ENCODE measurements at regions of chr4 and their contacts with region 1.

Region 1: DNA sequence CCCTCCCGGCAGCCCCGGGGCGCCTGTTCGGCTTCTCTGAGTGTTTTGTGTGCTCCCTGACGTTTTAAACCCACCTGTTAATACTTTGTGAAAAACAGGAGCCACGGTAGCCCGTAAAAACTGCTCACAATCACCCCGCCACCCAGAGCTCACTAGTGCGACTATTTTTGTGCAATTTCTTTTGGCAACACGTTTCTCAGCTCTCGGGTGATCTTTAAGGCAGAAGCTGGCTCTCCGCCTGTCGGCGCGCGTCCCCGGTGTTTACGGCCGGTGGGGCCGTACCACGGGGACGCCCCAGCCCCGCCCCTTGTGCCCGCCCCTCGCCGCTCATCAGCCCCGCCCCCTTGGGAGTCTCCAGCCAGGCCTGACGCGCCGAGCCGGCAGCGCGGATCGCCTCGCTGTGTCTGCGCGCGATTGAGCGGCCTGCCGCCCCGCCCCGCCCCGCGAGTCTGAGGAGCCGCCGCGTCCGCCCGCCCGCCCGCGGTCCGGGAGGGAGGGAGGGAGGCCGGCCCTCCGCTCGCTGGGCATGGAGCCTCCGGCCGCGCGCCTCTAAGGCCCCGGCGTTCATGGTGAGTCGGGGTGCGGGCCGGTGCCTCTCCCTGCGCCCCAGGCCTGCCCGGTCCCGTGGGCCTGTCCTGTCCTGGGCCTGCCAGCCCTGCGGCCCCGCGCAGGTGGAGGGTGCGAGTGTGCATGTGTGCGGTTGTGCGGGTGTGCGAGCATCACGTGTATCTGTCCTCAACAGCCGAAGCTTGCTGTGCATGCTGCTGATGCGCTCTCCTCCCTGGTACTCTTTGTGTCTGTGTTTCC is 56.2 kb upstream of the TADA2B start:
- DNase-seq: peak; percentile 96 to 98
- ATAC-seq: peak; percentile 98
- H3K4me3 ChIP-seq: peak overlapping the region; percentile 78 to 96
- H3K27ac ChIP-seq: peak overlapping the region; percentile 62 to 88
- H3K4me1 ChIP-seq: peaks cover 0 to 3% of the 10 kb centered on the region in 2 donors
- H3K27me3 ChIP-seq: no peaks in the 10 kb centered on the region

Region 2: DNA sequence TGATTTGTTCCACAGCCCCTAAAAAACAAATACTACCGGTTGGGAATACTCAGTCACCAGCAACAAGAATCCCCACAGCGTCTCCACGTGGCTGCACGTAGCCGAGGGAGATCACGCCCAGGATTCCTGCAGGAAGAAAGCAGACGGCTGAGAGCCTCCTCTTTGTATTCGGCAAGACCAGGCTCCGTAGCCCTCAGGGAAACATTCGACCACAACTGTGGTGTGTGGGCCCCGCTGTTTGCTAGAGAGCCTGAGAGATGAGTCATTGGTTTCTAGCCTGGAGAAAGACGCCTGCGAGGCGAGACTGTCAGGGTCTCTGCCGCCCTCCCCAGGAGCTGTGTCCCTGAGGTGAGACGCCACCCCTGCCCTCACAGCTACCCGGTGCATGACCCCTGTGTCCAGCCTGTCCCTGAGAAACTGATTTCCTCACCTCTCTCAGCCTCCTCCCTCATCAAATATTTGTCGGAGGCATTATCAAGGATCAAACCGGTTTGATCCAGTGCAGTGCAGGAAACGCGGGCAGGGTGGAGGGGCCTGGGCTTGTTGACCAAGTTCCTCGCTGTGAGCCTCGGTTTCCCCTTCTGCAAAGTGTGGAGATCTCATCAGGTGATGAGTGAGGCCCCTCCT is 298.0 kb before region 1 on chr4:
- intact Hi-C with region 1: no loop called
- DNase-seq: peak in 1 of 2 donors; percentile 66
- ATAC-seq: no peak
- H3K4me3 ChIP-seq: no peak overlapping the region
- H3K27ac ChIP-seq: no peak overlapping the region
- H3K4me1 ChIP-seq: no peaks in the 10 kb centered on the region
- H3K27me3 ChIP-seq: no peaks in the 10 kb centered on the region

Region 3: DNA sequence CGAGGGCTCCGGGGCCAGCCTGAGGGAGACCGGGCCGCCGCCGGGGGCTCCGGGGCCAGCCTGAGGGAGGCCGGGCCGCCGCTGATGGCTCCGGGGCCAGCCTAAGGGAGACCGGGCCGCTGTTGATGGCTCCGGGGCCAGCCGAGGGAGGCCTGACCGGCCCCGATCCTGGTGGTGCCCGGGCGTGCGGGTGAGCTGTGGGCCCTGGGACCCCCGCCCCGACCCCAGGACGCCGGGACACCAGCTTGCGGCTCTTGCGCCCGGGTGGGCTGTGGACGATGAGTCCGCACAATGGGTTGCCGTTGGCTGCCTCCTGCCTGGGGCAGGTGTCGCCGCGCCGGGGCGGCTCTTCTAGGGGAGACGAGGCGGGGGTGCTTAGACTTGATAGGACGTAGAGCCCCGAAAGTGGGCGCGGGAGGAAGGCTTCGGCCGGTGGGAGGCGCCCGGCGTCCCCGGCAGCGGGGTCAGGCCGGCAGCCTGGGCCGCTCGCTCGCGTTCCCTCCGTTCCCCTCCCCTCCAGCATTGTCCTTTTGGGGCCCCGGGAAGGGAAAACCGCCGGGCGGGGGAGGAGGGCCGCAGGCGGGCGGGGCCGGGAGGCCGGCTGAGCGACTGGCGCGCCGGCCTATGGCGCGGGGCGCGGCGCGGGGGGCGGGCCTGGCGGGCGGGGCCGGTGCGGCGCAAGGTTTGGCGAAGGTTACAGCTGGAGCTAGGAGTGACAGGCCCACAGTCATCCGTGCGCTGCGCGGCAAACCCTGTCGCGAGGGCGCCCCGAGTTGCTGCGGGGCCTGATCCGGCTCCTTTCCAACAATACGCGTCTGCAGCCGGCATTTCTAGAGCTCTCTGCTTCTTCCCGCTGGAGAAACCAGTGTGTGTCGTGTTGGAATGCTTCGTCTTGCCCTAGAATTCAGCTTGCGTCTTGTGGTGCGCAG is 203.7 kb before region 1 on chr4:
- intact Hi-C with region 1: loop called in 1 of 2 experiments (anchors 10 kb)
- DNase-seq: peak; percentile 92 to 96
- ATAC-seq: peak; percentile 94
- H3K4me3 ChIP-seq: peak overlapping the region; percentile 90 to 96
- H3K27ac ChIP-seq: peak overlapping the region; percentile 98 to 99
- H3K4me1 ChIP-seq: no peaks in the 10 kb centered on the region
- H3K27me3 ChIP-seq: no peaks in the 10 kb centered on the region

Region 4: DNA sequence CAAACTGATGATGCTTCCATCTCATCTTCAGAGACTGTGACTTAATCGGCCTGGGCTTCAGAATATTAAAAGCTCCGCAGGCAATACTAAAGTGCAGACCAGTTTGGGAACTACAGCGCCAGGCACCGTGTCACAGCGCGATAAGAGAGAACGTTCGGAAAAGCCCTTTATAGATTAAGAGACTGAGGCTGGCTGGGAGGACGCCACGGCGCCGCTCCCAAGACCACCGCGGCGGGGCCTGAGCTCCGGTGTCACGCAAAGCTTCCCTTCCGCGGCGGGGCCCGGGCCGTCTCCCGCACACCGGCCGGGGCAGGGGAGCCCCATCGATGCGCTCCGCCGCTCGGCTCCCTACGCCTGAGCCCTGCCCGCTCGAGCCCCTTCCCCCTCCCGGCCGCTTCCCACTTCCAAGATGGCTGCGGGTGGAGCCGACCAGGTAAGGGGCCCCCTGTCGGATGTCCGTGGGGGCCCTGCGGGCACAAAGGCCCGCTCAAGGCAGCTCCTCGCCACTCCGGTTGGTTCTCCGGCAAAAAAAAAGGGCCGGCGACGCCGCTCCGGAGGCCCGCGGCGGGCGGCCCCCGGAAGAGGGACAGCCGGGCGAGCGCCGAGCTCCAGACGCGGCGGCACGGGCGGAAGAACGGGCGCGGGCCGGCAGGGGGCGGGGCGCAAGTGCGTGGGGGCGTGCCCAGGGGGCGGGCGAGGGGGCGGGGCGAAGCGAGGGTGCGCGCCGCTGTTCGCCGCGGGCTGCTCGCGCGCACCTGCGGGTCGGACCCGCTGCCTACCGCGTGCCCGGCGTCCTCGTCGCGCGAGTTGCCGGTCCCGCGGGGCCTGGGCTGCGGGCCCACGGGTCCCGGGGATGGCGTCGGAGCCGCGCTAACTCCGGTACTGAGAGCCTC is 77.7 kb before region 1 on chr4 and contains the start of gene TBC1D14:
- intact Hi-C with region 1: loop called (anchors 2 to 5 kb)
- DNase-seq: peak; percentile 93 to 96
- ATAC-seq: peak; percentile 97
- H3K4me3 ChIP-seq: peak within 1 kb of the TSS; percentile 78 to 98
- H3K27ac ChIP-seq: peak within 1 kb of the TSS; percentile 68 to 97
- H3K4me1 ChIP-seq: no peaks in the 10 kb centered on the region
- H3K27me3 ChIP-seq: no peaks in the 10 kb centered on the region
- total RNA-seq, gene TBC1D14: 33.8 to 59.7 TPM

Region 5: DNA sequence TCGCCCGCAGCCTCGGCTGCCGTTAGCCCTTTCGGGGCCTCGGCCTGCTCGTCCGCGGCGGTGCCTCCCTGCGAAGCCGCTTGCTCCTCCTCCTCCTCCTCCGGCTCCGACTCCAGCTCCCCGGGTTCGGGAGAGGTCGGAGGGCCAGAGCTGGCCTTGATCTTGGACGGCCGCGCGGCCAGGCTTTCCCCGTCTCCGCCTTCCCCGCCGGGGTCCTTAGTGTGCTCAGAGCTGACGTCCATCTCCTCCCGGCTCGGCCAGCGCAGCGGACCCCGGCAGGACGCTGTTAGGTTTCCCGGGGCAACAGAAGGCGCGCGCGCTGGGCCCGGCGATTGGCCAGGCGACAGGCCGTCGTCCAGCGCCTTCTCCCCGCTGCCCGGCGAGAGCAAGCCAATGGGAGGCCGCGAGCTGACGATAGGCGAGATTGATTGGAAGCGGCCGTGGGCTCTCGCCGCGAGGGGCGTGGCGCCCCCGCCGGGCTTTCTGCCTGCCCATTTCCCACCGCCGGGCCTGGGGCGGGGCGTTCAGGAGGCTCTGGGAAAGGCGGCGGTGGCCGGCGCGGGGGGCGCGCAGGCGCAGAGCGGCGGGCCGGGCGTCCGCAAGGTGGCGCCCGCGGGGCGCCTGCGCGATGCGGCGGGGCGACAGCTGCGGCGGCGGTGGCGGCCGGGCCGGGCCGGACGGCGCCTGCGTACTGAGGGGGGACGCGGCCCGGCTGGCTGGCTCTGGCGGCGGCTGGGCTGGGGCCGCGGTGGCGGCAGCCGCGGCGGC is 55.9 kb after region 1 on chr4 and contains the start of gene TADA2B:
- intact Hi-C with region 1: loop called (anchors 1 to 5 kb)
- DNase-seq: peak; percentile 98 to 99
- ATAC-seq: peak; percentile 98
- H3K4me3 ChIP-seq: peak within 1 kb of the TSS; percentile 46 to 93
- H3K27ac ChIP-seq: peak within 1 kb of the TSS; percentile 63 to 93
- H3K4me1 ChIP-seq: no peaks in the 10 kb centered on the region
- H3K27me3 ChIP-seq: no peaks in the 10 kb centered on the region
- total RNA-seq, gene TADA2B: 18.1 to 19.2 TPM

Region 6: GRCh38 chr4:7067452-7068278 is 80.7 kb after region 1 on chr4 and contains the start of gene GRPEL1:
- intact Hi-C with region 1: loop called in 1 of 2 experiments (anchors 2 kb)
- DNase-seq: peak; percentile 100
- ATAC-seq: peak; percentile 99
- H3K4me3 ChIP-seq: peak within 1 kb of the TSS; percentile 74 to 76
- H3K27ac ChIP-seq: peak within 1 kb of the TSS in 1 of 2 donors; percentile 80
- H3K4me1 ChIP-seq: peaks cover 0 to 6% of the 10 kb centered on the region in 2 donors
- H3K27me3 ChIP-seq: no peaks in the 10 kb centered on the region
- total RNA-seq, gene GRPEL1: 16.1 to 22.0 TPM